ENCODE measurements at regions of chr5 and their contacts with region 1.

Region 1: DNA sequence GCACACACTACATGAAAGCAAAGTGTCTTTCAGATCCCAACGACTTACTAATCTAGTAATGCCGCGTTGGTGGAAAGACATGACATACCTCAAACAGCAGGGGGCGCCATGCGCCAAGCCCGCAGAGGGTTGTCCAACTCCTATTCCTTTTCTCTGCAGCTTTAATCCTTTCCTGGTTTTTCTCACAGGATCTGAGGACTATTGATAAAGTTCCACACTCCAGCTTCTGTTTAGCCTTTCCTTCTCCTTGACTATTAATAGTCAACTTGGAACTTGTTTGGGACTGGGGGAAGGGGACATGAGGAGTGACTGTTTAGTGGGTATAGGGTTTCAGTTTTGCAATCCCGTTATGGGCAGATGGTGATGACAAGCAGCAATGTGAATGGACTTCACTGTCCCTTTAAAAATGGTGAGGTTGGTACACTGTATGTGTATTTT is 62.9 kb downstream of the OTULIN start:
- DNase-seq: peak; percentile 71
- H3K4me3 ChIP-seq: no peak overlapping the region
- H3K27ac ChIP-seq: peak overlapping the region; percentile 10
- H3K4me1 ChIP-seq: peaks cover 52% of the 10 kb centered on the region
- H3K27me3 ChIP-seq: no peaks in the 10 kb centered on the region
- CTCF ChIP-seq: peak; percentile 95

Region 2: GRCh38 chr5:15003511-15003920 is 276.1 kb after region 1 on chr5:
- intact Hi-C with region 1: loop called (anchors 5 kb)
- DNase-seq: peak; percentile 48
- H3K4me3 ChIP-seq: no peak overlapping the region
- H3K27ac ChIP-seq: no peak overlapping the region
- H3K4me1 ChIP-seq: peaks cover 41% of the 10 kb centered on the region
- H3K27me3 ChIP-seq: no peaks in the 10 kb centered on the region
- CTCF ChIP-seq: peak; percentile 92

Measured in left ventricle myocardium inferior (tissue), 1 donor.